ENCODE measurements at regions of chrX and their contacts with region 1.

Region 1: GRCh38 chrX:70554081-70554480 is 109.4 kb downstream of the DLG3 start:
- DNase-seq: no peak
- H3K4me3 Mint-ChIP-seq: no peak overlapping the region
- H3K27ac Mint-ChIP-seq: no peak overlapping the region
- H3K4me1 Mint-ChIP-seq: peaks cover 12% of the 10 kb centered on the region
- H3K27me3 Mint-ChIP-seq: peaks cover 10% of the 10 kb centered on the region

Region 2: DNA sequence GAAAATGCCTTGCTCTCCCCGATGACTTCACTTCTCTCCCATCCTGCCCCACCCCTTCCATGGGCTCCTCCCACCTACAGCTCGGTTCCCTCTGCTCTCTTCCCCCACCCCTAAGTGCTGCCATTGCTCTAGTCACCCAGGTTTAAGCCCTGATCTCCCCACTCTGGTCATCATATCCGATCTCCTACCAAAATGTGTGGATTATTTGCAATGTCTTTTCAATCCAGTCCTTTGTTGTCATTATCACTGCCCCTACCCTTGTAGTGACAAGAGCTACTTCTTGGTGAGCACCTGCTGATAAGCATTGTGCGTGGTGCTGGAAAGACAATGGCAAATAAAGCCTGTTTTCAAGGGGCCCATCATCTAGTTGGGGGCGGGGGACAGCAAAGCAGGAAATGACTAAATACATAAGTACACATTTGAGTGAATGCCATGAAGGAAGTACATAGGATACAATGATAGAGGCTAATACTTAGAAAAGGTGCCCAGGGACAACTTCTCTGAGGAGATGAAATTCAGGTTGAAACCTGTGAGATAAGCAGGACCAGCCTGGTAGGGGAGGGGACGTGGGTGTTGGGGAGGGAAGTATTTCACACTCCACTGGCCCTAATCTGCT is 45.7 kb before region 1 on chrX:
- intact Hi-C with region 1: loop called (anchors 10 kb)
- DNase-seq: no peak
- H3K4me3 Mint-ChIP-seq: peak overlapping the region; percentile 20
- H3K27ac Mint-ChIP-seq: peak overlapping the region; percentile 82
- H3K4me1 Mint-ChIP-seq: peaks cover 51% of the 10 kb centered on the region
- H3K27me3 Mint-ChIP-seq: no peaks in the 10 kb centered on the region

Region 3: DNA sequence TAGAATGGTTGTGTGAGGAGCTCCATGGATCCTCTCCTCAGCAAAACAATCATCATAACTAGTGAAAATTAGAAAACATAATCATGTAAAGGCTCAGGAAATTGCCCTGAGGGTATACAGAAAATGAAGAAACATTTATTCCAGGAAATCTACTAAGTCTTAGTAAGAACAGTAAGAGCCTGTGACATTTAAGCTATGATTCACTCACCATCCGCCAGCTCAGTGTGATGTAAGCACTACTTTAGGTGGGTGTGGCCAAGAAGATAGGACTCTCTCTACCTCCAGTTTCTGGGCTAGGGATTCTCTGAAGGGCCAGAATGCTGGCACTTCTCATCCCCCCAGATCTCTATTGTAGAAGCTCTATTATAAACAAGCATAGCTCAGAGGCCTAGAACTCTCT is 38.0 kb after region 1 on chrX:
- intact Hi-C with region 1: loop called (anchors 2 kb)
- DNase-seq: peak; percentile 5
- H3K4me3 Mint-ChIP-seq: no peak overlapping the region
- H3K27ac Mint-ChIP-seq: peak overlapping the region; percentile 73
- H3K4me1 Mint-ChIP-seq: peaks cover 25% of the 10 kb centered on the region
- H3K27me3 Mint-ChIP-seq: no peaks in the 10 kb centered on the region

Measured in activated T-helper 1 cell treated with anti-CD3 and anti-CD28 coated beads, Interleukin-12 subunit alpha, Interleukin-12 subunit beta, Interleukin-2, Interleukin-4 antibody, amounts not matched to agents 30 ng/mL and 10 ng/mL and 1 ng/mL, durations not matched to agents 14 hours and 24 hours and 36 hours (primary cell).